HepG2 (cell line): ENCODE measurements at regions of chr3 and their contacts with region 1.

Region 1: GRCh38 chr3:166685246-166685645 is 694.9 kb downstream of the ZBBX start:
- DNase-seq: no peak
- ATAC-seq: no peak
- H3K4me3 ChIP-seq: no peak overlapping the region
- H3K27ac ChIP-seq: no peak overlapping the region
- H3K4me1 ChIP-seq: no peaks in the 10 kb centered on the region
- H3K27me3 ChIP-seq: no peaks in the 10 kb centered on the region
- CTCF ChIP-seq: no peak
- EP300 ChIP-seq: no peak
- POLR2A ChIP-seq: no peak
- RAD21 ChIP-seq: no peak

Region 2: GRCh38 chr3:165874663-165875489 is 810.4 kb before region 1 on chr3:
- CTCF ChIA-PET with region 1: no interaction called
- POLR2A ChIA-PET with region 1: no interaction called
- in situ Hi-C with region 1: no loop called
- intact Hi-C with region 1: loop called (anchors 10 kb)
- DNase-seq: peak; percentile 83
- ATAC-seq: peak; percentile 95
- H3K4me3 ChIP-seq: peak overlapping the region; percentile 72 to 94 (median 81)
- H3K27ac ChIP-seq: peak overlapping the region; percentile 87
- H3K4me1 ChIP-seq: peaks cover 30% of the 10 kb centered on the region
- H3K27me3 ChIP-seq: no peaks in the 10 kb centered on the region; a peak in 3 of 5 replicates
- CTCF ChIP-seq: peak; percentile 88
- EP300 ChIP-seq: peak in 1 of 2 experiments; percentile 2; a peak in 1 of 4 replicates
- POLR2A ChIP-seq: peak; percentile 69 to 83
- RAD21 ChIP-seq: no peak

Region 3: GRCh38 chr3:166013073-166013679 is 672.1 kb before region 1 on chr3:
- CTCF ChIA-PET with region 1: no interaction called
- POLR2A ChIA-PET with region 1: no interaction called
- in situ Hi-C with region 1: no loop called
- intact Hi-C with region 1: loop called (anchors 1 kb)
- DNase-seq: peak; percentile 39
- ATAC-seq: no peak
- H3K4me3 ChIP-seq: no peak overlapping the region
- H3K27ac ChIP-seq: no peak overlapping the region
- H3K4me1 ChIP-seq: no peaks in the 10 kb centered on the region
- H3K27me3 ChIP-seq: no peaks in the 10 kb centered on the region
- CTCF ChIP-seq: peak; percentile 47
- EP300 ChIP-seq: no peak
- POLR2A ChIP-seq: no peak
- RAD21 ChIP-seq: no peak